Activated CD4-positive, alpha-beta T cell treated with anti-CD3 and anti-CD28 coated beads for 36 hours (primary cell): ENCODE measurements at regions of chr14 and their contacts with region 1.

Region 1: GRCh38 chr14:23034483-23035302 is at the start of gene PSMB5:
- DNase-seq: peak; percentile 94
- ATAC-seq: peak; percentile 95
- H3K4me3 Mint-ChIP-seq: peak within 1 kb of the TSS; percentile 97
- H3K27ac Mint-ChIP-seq: peak within 1 kb of the TSS; percentile 97
- H3K4me1 Mint-ChIP-seq: peaks cover 36% of the 10 kb centered on the region
- H3K27me3 Mint-ChIP-seq: no peaks in the 10 kb centered on the region
- total RNA-seq, gene PSMB5: 104 to 129 TPM

Region 2: DNA sequence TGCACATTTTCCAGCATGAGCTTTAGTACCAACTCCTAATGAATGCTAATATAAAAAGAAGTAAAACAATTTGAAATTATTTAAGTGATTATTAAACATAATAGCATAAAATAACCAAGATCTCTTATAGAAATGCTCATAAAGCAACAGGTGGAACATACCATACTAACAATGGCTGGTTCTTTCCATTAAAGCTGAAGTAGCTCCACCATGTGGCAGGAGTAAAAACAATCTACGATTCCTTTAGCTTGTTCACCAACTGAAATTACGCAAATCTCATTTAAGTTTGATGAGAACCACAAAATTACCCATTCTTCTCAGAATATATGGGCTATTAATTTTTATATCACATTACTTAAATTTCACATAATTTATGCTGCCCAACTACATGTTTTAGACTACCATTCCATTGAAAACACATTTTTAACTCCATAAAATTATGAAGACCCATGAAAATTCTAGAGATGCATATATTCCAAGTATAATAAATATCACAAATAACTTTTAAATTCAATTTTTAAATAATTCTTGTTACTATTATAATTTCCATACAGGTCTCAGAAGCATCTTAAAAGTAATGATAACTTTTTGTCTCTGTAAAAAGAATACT is 659.3 kb before region 1 on chr14:
- CTCF ChIA-PET with region 1: no interaction called
- POLR2A ChIA-PET with region 1: no interaction called
- intact Hi-C with region 1: no loop called
- DNase-seq: no peak
- ATAC-seq: no peak
- H3K4me3 Mint-ChIP-seq: no peak overlapping the region
- H3K27ac Mint-ChIP-seq: no peak overlapping the region
- H3K4me1 Mint-ChIP-seq: no peaks in the 10 kb centered on the region
- H3K27me3 Mint-ChIP-seq: no peaks in the 10 kb centered on the region

Region 3: GRCh38 chr14:22829661-22830442 is 204.8 kb before region 1 on chr14 and contains the start of gene MRPL52:
- CTCF ChIA-PET with region 1: no interaction called
- POLR2A ChIA-PET with region 1: no interaction called
- intact Hi-C with region 1: loop called in 1 of 2 experiments (anchors 1 kb)
- DNase-seq: peak; percentile 94
- ATAC-seq: peak; percentile 92
- H3K4me3 Mint-ChIP-seq: peak within 1 kb of the TSS; percentile 82
- H3K27ac Mint-ChIP-seq: peak within 1 kb of the TSS; percentile 98
- H3K4me1 Mint-ChIP-seq: peaks cover 26% of the 10 kb centered on the region
- H3K27me3 Mint-ChIP-seq: no peaks in the 10 kb centered on the region
- total RNA-seq, gene MRPL52: 115 to 136 TPM

Region 4: GRCh38 chr14:22929104-22929847 is 105.4 kb before region 1 on chr14 and contains the start of gene PRMT5:
- CTCF ChIA-PET with region 1: interaction called, 5 read pairs
- POLR2A ChIA-PET with region 1: no interaction called
- intact Hi-C with region 1: loop called in 1 of 2 experiments (anchors 1 kb)
- DNase-seq: peak; percentile 99
- ATAC-seq: peak; percentile 98
- H3K4me3 Mint-ChIP-seq: no peak within 1 kb of the TSS
- H3K27ac Mint-ChIP-seq: no peak within 1 kb of the TSS
- H3K4me1 Mint-ChIP-seq: peaks cover 39% of the 10 kb centered on the region
- H3K27me3 Mint-ChIP-seq: no peaks in the 10 kb centered on the region
- total RNA-seq, gene PRMT5: 121 to 151 TPM

Region 5: GRCh38 chr14:23047034-23047634 is 12.4 kb after region 1 on chr14:
- CTCF ChIA-PET with region 1: no interaction called
- POLR2A ChIA-PET with region 1: no interaction called
- intact Hi-C with region 1: no loop called
- DNase-seq: no peak
- ATAC-seq: no peak
- H3K4me3 Mint-ChIP-seq: no peak overlapping the region
- H3K27ac Mint-ChIP-seq: no peak overlapping the region
- H3K4me1 Mint-ChIP-seq: no peaks in the 10 kb centered on the region
- H3K27me3 Mint-ChIP-seq: peaks cover 2% of the 10 kb centered on the region

Region 6: GRCh38 chr14:24141097-24141880 is 1106.6 kb after region 1 on chr14 and contains the start of gene EMC9:
- CTCF ChIA-PET with region 1: no interaction called
- POLR2A ChIA-PET with region 1: no interaction called
- intact Hi-C with region 1: loop called in 1 of 2 experiments (anchors 10 kb)
- DNase-seq: peak; percentile 100
- ATAC-seq: peak; percentile 87
- H3K4me3 Mint-ChIP-seq: peak within 1 kb of the TSS; percentile 88
- H3K27ac Mint-ChIP-seq: peak within 1 kb of the TSS; percentile 97
- H3K4me1 Mint-ChIP-seq: peaks cover 66% of the 10 kb centered on the region
- H3K27me3 Mint-ChIP-seq: no peaks in the 10 kb centered on the region
- total RNA-seq, gene EMC9: 36.9 to 46.7 TPM